MCF 10A (cell line): ENCODE measurements at regions of chr11 and their contacts with region 1.

Region 1: DNA sequence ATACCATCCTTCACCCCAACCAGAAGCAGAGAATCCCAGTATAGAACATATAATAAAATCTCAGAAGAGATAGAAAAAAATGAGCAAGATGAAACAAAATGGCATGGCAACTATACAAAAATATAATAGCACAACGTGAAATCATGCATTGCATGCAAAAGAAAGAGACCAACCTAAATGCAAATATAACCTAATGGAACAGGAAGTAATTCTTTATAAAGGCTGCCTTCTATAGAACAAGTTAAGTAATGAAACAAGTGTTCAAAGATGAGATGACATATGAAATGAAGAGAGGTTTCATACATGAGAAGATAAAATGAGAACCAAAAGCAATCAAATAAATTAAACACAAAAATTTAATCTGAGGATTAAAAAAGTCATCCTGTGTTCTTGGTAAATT is 18.5 kb upstream of the ARHGAP20 start:
- DNase-seq: no peak
- H3K4me3 Mint-ChIP-seq: no peak overlapping the region
- H3K27ac Mint-ChIP-seq: no peak overlapping the region
- H3K4me1 Mint-ChIP-seq: no peaks in the 10 kb centered on the region
- H3K27me3 Mint-ChIP-seq: peaks cover 82% of the 10 kb centered on the region
- CTCF ChIP-seq: no peak

Region 2: DNA sequence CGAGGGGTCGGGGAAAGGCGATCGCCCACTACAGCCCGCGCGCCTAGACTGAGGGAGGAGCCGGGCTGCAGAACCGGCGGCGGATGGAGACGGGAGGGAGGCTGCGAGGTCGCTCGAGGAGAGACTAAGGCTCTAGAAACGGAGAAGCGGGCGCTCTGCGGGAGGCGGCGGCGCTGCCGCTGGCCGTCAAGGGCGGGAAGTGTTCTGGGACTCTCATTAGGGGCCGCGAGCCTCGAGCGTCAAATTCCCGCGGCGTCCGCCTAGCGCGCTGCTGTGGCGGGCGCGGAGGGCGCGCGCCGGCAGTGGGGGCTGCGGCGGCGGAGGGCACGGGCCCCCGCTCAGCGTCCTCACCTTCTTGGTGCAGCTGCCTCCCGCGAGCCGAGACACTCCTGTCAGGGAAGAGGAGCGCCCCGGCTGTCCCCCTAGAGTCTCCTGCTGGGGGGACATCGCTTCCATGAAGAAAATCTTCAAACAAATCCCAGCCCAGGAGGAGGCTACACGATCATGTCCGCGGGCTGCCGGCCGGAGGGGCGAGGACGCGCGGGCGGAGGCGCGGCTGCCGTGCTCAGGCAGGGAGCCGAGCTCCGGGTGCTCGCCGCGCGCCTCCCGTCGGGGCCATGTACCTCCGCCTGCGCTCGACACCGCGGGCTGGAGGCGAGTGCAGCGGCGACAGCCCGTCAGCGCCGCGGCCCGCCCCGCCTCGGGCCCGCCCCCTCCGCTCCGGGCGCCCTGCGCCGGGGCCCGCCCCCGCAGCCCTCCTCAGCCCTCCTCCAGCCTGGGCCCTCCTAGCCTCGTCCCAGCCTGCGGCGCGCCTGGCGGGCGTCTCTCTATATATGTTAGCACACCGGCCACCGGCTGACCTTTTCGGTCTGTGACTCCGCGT is 18.8 kb before region 1 on chr11 and contains the start of gene ARHGAP20:
- CTCF ChIA-PET with region 1: no interaction called
- POLR2A ChIA-PET with region 1: no interaction called
- intact Hi-C with region 1: loop called (anchors 1 kb)
- DNase-seq: no peak
- H3K4me3 Mint-ChIP-seq: no peak within 1 kb of the TSS
- H3K27ac Mint-ChIP-seq: no peak within 1 kb of the TSS
- H3K4me1 Mint-ChIP-seq: peaks cover 4% of the 10 kb centered on the region
- H3K27me3 Mint-ChIP-seq: peaks cover 76% of the 10 kb centered on the region
- CTCF ChIP-seq: no peak
- total RNA-seq, gene ARHGAP20: not detected in 2 replicates

Region 3: GRCh38 chr11:110878513-110878912 is 147.7 kb after region 1 on chr11:
- CTCF ChIA-PET with region 1: no interaction called
- POLR2A ChIA-PET with region 1: no interaction called
- intact Hi-C with region 1: no loop called
- DNase-seq: no peak
- H3K4me3 Mint-ChIP-seq: no peak overlapping the region
- H3K27ac Mint-ChIP-seq: no peak overlapping the region
- H3K4me1 Mint-ChIP-seq: no peaks in the 10 kb centered on the region
- H3K27me3 Mint-ChIP-seq: peaks cover 10% of the 10 kb centered on the region
- CTCF ChIP-seq: no peak